ENCODE measurements at regions of chr20 and their contacts with region 1.

Region 1: DNA sequence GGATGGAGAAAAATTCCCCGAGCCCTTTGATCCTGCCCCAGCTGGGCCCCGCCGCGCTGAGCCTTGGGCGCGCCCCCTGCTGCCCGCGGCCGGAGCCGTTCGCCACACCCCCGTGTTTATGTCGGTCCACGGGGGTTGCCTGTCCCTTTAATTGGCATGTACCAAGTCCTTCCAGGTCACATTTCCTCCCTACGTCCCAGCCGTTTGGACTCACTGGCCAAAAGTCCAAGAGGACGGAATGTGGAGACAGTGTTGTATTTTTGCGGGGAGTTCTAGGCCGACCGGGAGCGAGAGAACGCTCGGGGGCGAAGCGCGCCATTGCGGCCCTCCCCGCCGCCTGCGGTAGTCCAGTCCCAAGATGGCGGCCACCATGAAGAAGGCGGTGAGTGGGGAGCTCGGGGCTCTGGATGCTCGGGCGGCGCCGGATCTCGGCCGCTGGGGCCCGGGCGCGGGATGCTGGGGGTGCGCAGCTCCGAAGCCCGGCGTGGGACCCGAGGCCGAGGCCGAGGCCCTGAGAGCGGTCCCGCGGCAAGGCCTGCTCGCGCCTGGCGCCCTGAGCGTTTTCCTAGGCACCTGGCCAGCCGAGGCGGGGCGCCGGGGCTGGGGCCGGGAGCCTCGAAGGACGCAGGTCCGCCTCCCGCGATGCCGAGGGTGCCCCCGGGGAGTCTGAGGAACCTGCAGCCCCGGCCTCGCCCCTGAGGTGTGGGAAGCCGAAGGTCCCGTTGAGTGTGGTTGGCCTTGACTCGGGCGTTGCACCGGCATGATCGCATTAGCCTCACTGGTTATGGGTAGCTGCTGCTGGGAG is at the start of gene PFDN4:
- DNase-seq: peak; percentile 89
- ATAC-seq: peak; percentile 93
- H3K4me3 ChIP-seq: peak within 1 kb of the TSS; percentile 79
- H3K27ac ChIP-seq: peak within 1 kb of the TSS; percentile 80
- H3K4me1 ChIP-seq: peaks cover 13% of the 10 kb centered on the region
- H3K27me3 ChIP-seq: no peaks in the 10 kb centered on the region
- CTCF ChIP-seq: peak; percentile 96
- total RNA-seq, gene PFDN4: 100 and 122 TPM in 2 replicates

Region 2: GRCh38 chr20:53578492-53579222 is 629.3 kb before region 1 on chr20:
- CTCF ChIA-PET with region 1: no interaction called
- POLR2A ChIA-PET with region 1: no interaction called
- intact Hi-C with region 1: loop called (anchors 10 kb)
- DNase-seq: peak; percentile 100
- ATAC-seq: peak; percentile 12
- H3K4me3 ChIP-seq: peak overlapping the region; percentile 75
- H3K27ac ChIP-seq: peak overlapping the region; percentile 88
- H3K4me1 ChIP-seq: peaks cover 59% of the 10 kb centered on the region
- H3K27me3 ChIP-seq: no peaks in the 10 kb centered on the region
- CTCF ChIP-seq: peak; percentile 99

Region 3: DNA sequence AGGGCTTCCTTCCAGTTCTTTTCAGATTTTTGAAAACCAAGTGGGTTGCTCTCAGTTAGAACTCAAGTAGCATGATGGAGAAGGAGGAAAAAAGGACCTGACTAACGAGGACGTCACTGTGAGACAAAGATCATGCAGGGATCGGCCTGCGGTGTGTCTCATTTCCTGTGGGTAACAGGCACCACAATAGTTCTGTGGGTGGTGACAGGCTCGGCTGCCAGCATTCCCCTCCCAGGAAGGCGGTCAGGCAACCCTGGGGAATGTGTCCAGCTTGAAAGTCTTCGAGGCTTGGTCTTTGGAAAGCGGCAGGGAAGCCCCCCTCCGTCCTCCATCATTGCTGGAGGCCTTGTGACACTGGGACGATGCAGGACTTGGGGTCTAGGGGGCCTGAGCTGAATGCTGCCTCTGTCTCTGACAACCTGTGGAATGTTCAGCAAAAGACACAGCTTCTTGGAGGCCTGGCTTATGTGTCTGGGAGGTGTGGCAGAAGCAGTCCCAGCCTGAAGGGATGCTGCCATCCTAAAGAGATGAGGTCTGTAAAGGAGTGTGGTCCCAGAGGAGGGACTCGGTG is 258.5 kb before region 1 on chr20:
- CTCF ChIA-PET with region 1: no interaction called
- POLR2A ChIA-PET with region 1: no interaction called
- intact Hi-C with region 1: loop called (anchors 5 kb)
- DNase-seq: peak; percentile 98
- ATAC-seq: peak; percentile 99
- H3K4me3 ChIP-seq: no peak overlapping the region; the same call in 1 of the 2 replicates
- H3K27ac ChIP-seq: peak overlapping the region; percentile 60
- H3K4me1 ChIP-seq: peaks cover 18% of the 10 kb centered on the region
- H3K27me3 ChIP-seq: no peaks in the 10 kb centered on the region
- CTCF ChIP-seq: no peak

Region 4: DNA sequence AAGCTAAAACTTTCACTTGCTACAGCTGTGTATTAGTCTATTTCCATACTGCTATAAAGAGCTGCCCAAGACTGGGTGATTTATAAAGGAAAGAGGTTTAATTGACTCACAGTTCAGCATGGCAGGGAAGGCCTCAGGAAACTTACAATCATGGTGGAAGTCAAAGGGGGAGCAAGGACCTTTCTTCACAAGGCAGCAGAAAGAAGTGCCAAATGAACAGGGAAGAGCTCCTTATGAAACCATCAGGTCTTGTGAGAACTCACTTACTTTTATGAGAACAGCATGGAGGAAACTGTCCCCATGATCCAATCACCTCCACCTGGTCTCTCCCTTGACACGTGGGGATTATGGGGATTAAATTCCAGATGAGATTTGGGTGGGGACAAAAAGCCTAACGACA is 170.9 kb before region 1 on chr20:
- CTCF ChIA-PET with region 1: interaction called, 10 read pairs
- POLR2A ChIA-PET with region 1: no interaction called
- intact Hi-C with region 1: no loop called
- DNase-seq: no peak
- ATAC-seq: no peak
- H3K4me3 ChIP-seq: no peak overlapping the region
- H3K27ac ChIP-seq: no peak overlapping the region
- H3K4me1 ChIP-seq: no peaks in the 10 kb centered on the region
- H3K27me3 ChIP-seq: peaks cover 79% of the 10 kb centered on the region
- CTCF ChIP-seq: no peak

Region 5: DNA sequence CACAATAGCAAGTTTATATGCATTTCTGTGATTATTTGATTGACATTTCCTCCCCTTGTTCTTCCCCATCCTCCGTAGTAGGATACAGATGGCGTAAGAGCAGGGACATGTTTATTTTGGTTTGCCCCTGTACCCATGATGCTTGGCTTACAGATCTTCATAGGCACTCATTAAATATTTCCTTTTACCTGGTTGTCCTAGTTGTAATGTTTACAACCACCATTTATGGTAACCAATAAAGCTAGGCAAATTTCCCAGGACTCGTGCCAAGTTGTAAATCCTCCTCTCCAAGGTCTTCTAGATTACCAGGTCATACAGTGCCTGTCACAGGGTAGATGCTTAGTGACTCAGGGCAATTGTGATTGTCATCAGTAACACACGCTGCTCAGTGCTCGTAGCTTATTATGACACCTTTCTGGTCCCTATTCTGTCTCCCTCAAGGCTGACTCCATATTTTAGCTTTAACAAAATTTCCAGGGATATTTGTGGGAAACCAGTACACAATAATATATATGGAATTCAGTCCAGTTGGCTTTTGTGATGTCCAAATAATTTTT is 58.9 kb before region 1 on chr20:
- CTCF ChIA-PET with region 1: no interaction called
- POLR2A ChIA-PET with region 1: no interaction called
- intact Hi-C with region 1: no loop called
- DNase-seq: peak; percentile 100
- ATAC-seq: peak; percentile 96
- H3K4me3 ChIP-seq: no peak overlapping the region
- H3K27ac ChIP-seq: peak overlapping the region; percentile 7; the same call in 1 of the 2 replicates
- H3K4me1 ChIP-seq: peaks cover 24% of the 10 kb centered on the region
- H3K27me3 ChIP-seq: no peaks in the 10 kb centered on the region
- CTCF ChIP-seq: no peak

Measured in PC-3 (cell line).